Right cardiac atrium (tissue), 5 donors: ENCODE measurements at regions of chr13 and their contacts with region 1.

Region 1: GRCh38 chr13:77492982-77493381 is 42.5 kb upstream of the SCEL start:
- DNase-seq: no peak
- ATAC-seq: peak; percentile 71 to 78
- H3K4me3 ChIP-seq: no peak overlapping the region
- H3K27ac ChIP-seq: no peak overlapping the region
- H3K4me1 ChIP-seq: no peaks in the 10 kb centered on the region
- H3K27me3 ChIP-seq: no peaks in the 10 kb centered on the region

Region 2: GRCh38 chr13:77544355-77544754 is 51.4 kb after region 1 on chr13:
- intact Hi-C with region 1: no loop called
- DNase-seq: peak; percentile 78 to 90 (median 89)
- ATAC-seq: peak; percentile 97 to 98
- H3K4me3 ChIP-seq: no peak overlapping the region
- H3K27ac ChIP-seq: no peak overlapping the region
- H3K4me1 ChIP-seq: peaks cover 4% of the 10 kb centered on the region
- H3K27me3 ChIP-seq: no peaks in the 10 kb centered on the region

Region 3: DNA sequence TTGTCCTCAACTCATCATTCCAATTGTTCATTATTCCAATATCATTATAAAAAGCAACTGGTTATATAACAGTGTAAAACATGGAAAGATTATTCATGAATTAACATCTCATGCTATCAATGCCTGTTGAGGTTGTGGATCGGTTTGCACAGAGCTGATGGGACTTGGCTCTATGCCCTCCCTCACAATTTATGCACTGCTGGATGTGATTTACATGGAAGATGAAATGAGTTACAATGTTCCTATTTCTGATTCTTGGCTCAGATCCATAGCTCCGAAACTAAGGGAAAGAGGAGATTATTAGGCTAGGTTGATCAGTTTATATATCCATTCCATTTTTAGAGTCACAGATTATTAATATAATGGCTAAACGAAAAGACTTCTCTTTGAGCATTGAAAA is 81.1 kb after region 1 on chr13:
- intact Hi-C with region 1: loop called in 1 of 4 experiments (anchors 5 kb)
- DNase-seq: no peak
- ATAC-seq: no peak
- H3K4me3 ChIP-seq: no peak overlapping the region
- H3K27ac ChIP-seq: no peak overlapping the region
- H3K4me1 ChIP-seq: no peaks in the 10 kb centered on the region
- H3K27me3 ChIP-seq: no peaks in the 10 kb centered on the region

Region 4: GRCh38 chr13:78102121-78102677 is 609.2 kb after region 1 on chr13:
- intact Hi-C with region 1: no loop called
- DNase-seq: peak; percentile 52 to 72 (median 63)
- ATAC-seq: peak; percentile 96
- H3K4me3 ChIP-seq: no peak overlapping the region
- H3K27ac ChIP-seq: peak overlapping the region; percentile 45
- H3K4me1 ChIP-seq: peaks cover 1% of the 10 kb centered on the region
- H3K27me3 ChIP-seq: no peaks in the 10 kb centered on the region